ENCODE measurements at regions of chr19 and their contacts with region 1.

Region 1: GRCh38 chr19:14006243-14006765 is at the start of gene RFX1:
- DNase-seq: peak; percentile 98 to 100
- H3K4me3 ChIP-seq: peak within 1 kb of the TSS; percentile 62 to 81 (median 69)
- H3K27ac ChIP-seq: peak within 1 kb of the TSS; percentile 95
- H3K4me1 ChIP-seq: peaks cover 0 to 4% (median under 1%) of the 10 kb centered on the region in 4 experiments; a peak in 5 of 7 replicates
- H3K27me3 ChIP-seq: no peaks in the 10 kb centered on the region
- CTCF ChIP-seq: no peak
- EP300 ChIP-seq: peak; percentile 43 to 90
- POLR2A ChIP-seq: peak in 1 of 2 experiments; percentile 44; a peak in 2 of 3 replicates
- RAD21 ChIP-seq: no peak
- total RNA-seq, gene RFX1: 16.1 and 17.0 TPM in 2 replicates

Region 2: DNA sequence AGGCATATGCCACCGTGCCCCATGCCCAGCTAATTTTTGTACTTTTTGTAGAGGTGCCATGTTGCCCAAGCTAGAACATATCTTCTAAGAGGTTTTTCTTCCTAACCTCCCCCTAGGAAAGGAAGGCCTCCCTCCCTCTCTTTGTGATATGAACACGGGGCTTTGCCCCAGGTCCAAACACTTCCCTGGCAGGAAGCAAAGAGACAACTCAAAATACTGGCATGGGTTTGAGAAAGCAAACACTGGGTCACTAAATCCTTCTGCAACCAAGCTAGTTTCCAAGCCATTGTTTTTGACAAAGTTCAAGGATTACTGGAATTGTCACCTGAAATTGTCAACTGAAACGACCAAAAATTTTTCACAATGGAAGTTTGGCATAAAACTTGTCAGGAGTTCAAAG is 91.5 kb before region 1 on chr19:
- CTCF ChIA-PET with region 1: no interaction called
- POLR2A ChIA-PET with region 1: no interaction called
- DNase-seq: no peak
- H3K4me3 ChIP-seq: no peak overlapping the region
- H3K27ac ChIP-seq: no peak overlapping the region
- H3K4me1 ChIP-seq: no peaks in the 10 kb centered on the region
- H3K27me3 ChIP-seq: no peaks in the 10 kb centered on the region
- CTCF ChIP-seq: no peak
- EP300 ChIP-seq: no peak
- POLR2A ChIP-seq: no peak
- RAD21 ChIP-seq: no peak

Region 3: DNA sequence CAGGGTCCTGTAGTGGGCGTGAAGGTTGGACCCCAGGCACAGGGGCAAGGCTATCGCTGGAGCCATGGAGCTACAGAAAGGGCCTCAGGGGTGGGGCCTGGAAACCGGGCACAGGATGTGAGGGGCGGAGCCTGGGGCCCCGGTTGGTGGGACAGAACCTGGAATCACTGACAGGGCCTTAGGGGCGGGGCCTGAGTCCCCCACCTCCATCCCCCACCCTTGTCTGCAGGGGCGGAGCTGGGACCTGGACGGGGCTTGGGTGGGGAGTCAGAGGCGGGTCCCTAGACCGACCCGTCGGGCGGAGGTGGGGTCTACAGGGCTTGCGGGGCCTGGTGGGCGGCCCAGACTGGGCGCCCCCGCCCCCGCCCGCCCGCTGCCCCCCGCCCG is 28.0 kb before region 1 on chr19:
- CTCF ChIA-PET with region 1: interaction called, 6 read pairs
- POLR2A ChIA-PET with region 1: interaction called, 16 read pairs
- DNase-seq: peak; percentile 94 to 98
- H3K4me3 ChIP-seq: peak overlapping the region; percentile 42 to 70 (median 44)
- H3K27ac ChIP-seq: peak overlapping the region; percentile 56; the same call in 1 of the 2 replicates
- H3K4me1 ChIP-seq: peaks cover 0 to 15% (median 8%) of the 10 kb centered on the region in 4 experiments; a peak in 4 of 7 replicates
- H3K27me3 ChIP-seq: no peaks in the 10 kb centered on the region
- CTCF ChIP-seq: 0 out of 4 replicates have a peak, but pooled peaks of 1 of the 3 experiments have one; percentile 3
- EP300 ChIP-seq: no peak
- POLR2A ChIP-seq: no peak; a peak in 1 of 3 replicates
- RAD21 ChIP-seq: no peak

Region 4: GRCh38 chr19:13986348-13986904 is 19.9 kb before region 1 on chr19:
- CTCF ChIA-PET with region 1: interaction called, 5 read pairs
- POLR2A ChIA-PET with region 1: interaction called, 11 read pairs
- DNase-seq: peak; percentile 68 to 85
- H3K4me3 ChIP-seq: peak overlapping the region in 3 of 4 experiments; percentile 7 to 46 (median 26); a peak in 4 of 8 replicates
- H3K27ac ChIP-seq: peak overlapping the region; percentile 83; the same call in 1 of the 2 replicates
- H3K4me1 ChIP-seq: peaks cover 0 to 42% (median 36%) of the 10 kb centered on the region in 4 experiments; a peak in 6 of 7 replicates
- H3K27me3 ChIP-seq: no peaks in the 10 kb centered on the region
- CTCF ChIP-seq: no peak
- EP300 ChIP-seq: no peak
- POLR2A ChIP-seq: peak in 1 of 2 experiments; percentile 51; a peak in 1 of 3 replicates
- RAD21 ChIP-seq: no peak

Region 5: GRCh38 chr19:13995017-13995728 is 11.1 kb before region 1 on chr19:
- CTCF ChIA-PET with region 1: interaction called, 5 read pairs
- POLR2A ChIA-PET with region 1: interaction called, 16 read pairs
- DNase-seq: no peak
- H3K4me3 ChIP-seq: no peak overlapping the region
- H3K27ac ChIP-seq: no peak overlapping the region; the same call in 1 of the 2 replicates
- H3K4me1 ChIP-seq: no peaks in the 10 kb centered on the region; a peak in 2 of 7 replicates
- H3K27me3 ChIP-seq: no peaks in the 10 kb centered on the region
- CTCF ChIP-seq: no peak
- EP300 ChIP-seq: no peak
- POLR2A ChIP-seq: no peak
- RAD21 ChIP-seq: no peak; a peak in 1 of 4 replicates

Region 6: GRCh38 chr19:14031719-14032480 is 25.6 kb after region 1 on chr19 and contains the start of gene IL27RA:
- CTCF ChIA-PET with region 1: interaction called, 12 read pairs
- POLR2A ChIA-PET with region 1: interaction called, 6 read pairs
- DNase-seq: peak; percentile 31 to 84
- H3K4me3 ChIP-seq: peak within 1 kb of the TSS; percentile 58 to 78 (median 68)
- H3K27ac ChIP-seq: no peak within 1 kb of the TSS
- H3K4me1 ChIP-seq: peaks cover 0 to 9% (median 3%) of the 10 kb centered on the region in 4 experiments; a peak in 6 of 7 replicates
- H3K27me3 ChIP-seq: peaks cover 0 to 12% (median 9%) of the 10 kb centered on the region in 4 experiments; a peak in 5 of 7 replicates
- CTCF ChIP-seq: peak; percentile 76 to 82 (median 78)
- EP300 ChIP-seq: no peak
- POLR2A ChIP-seq: no peak
- RAD21 ChIP-seq: peak; percentile 58 to 68
- total RNA-seq, gene IL27RA: 14.7 and 15.1 TPM in 2 replicates

Measured in H1 (cell line).